AG04450 (cell line): ENCODE measurements at regions of chr3 and their contacts with region 1.

Region 1: DNA sequence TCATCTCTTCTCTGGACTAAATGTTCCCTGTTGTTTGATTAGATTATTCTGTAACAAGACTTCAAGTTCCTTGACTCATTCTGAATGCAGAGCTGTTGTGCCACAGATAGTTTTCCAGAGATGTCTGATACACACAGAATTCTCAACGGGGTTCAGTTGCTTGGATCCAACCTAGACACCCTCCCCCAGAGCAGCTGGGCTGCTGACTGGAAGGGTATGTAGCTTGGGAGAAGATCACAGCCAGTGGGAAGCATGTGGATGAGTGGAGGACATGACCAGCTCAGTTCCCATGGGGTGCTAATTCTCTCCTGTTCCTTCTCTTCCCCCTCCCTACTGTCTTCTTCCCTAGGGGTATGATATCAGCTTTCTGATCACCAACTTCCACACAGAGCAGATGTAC is 6.6 kb upstream of the TTLL3 start:
- DNase-seq: no peak
- H3K4me3 ChIP-seq: no peak overlapping the region
- H3K27ac ChIP-seq: peak overlapping the region; percentile 63
- H3K27me3 ChIP-seq: no peaks in the 10 kb centered on the region
- CTCF ChIP-seq: no peak

Region 2: GRCh38 chr3:9736831-9737230 is 66.7 kb before region 1 on chr3:
- CTCF ChIA-PET with region 1: no interaction called
- POLR2A ChIA-PET with region 1: no interaction called
- DNase-seq: no peak
- H3K4me3 ChIP-seq: no peak overlapping the region
- H3K27ac ChIP-seq: no peak overlapping the region
- H3K27me3 ChIP-seq: no peaks in the 10 kb centered on the region
- CTCF ChIP-seq: no peak

Region 3: GRCh38 chr3:9792405-9793160 is 10.9 kb before region 1 on chr3 and contains the starts of genes ARPC4 and TADA3:
- CTCF ChIA-PET with region 1: interaction called, 8 read pairs
- POLR2A ChIA-PET with region 1: interaction called, 18 read pairs
- DNase-seq: peak; percentile 96
- H3K4me3 ChIP-seq: peak within 1 kb of the TSS; percentile 99
- H3K27ac ChIP-seq: peak within 1 kb of the TSS; percentile 93
- H3K27me3 ChIP-seq: no peaks in the 10 kb centered on the region
- CTCF ChIP-seq: no peak
- polyA plus RNA-seq, gene ARPC4: 199 and 200 TPM in 2 replicates
- polyA plus RNA-seq, gene TADA3: 61.8 and 83.7 TPM in 2 replicates